IMR-90 (cell line): ENCODE measurements at regions of chr3 and their contacts with region 1.

Region 1: DNA sequence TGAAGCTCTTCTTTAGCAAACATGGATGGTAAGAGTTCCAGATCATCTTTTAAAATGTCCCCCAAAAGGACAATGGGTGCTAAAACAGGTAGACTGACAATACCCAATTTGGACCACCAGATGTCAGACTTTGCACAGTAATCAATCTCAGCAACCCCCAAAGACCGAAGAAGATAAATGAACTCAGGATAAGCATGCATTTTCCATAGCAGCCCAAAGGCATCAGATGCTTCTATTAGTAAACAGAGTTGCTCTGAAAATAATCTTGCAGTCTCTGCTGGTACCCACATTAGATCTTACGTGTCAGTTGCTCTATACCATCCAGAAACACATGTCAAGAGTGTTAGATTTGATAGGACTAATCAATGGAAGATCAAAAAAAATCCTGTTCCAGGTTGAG is 20.6 kb downstream of the MYH15 start:
- DNase-seq: peak; percentile 51
- ATAC-seq: peak; percentile 48
- H3K4me3 ChIP-seq: no peak overlapping the region
- H3K27ac ChIP-seq: no peak overlapping the region
- H3K4me1 ChIP-seq: peaks cover 4% of the 10 kb centered on the region
- H3K27me3 ChIP-seq: no peaks in the 10 kb centered on the region
- CTCF ChIP-seq: peak; percentile 70
- POLR2A ChIP-seq: no peak
- RAD21 ChIP-seq: peak; percentile 84

Region 2: GRCh38 chr3:107676469-107677309 is 813.1 kb before region 1 on chr3:
- CTCF ChIA-PET with region 1: no interaction called
- POLR2A ChIA-PET with region 1: no interaction called
- dilution Hi-C with region 1: no loop called
- in situ Hi-C with region 1: loop called (anchors 10 kb)
- intact Hi-C with region 1: no loop called
- DNase-seq: peak; percentile 43
- ATAC-seq: peak; percentile 54; the same call in 1 of the 2 replicates
- H3K4me3 ChIP-seq: no peak overlapping the region
- H3K27ac ChIP-seq: no peak overlapping the region
- H3K4me1 ChIP-seq: 0 out of 2 replicates have a peak, but pooled peaks cover 3% of the 10 kb centered on the region
- H3K27me3 ChIP-seq: no peaks in the 10 kb centered on the region
- CTCF ChIP-seq: peak; percentile 57
- POLR2A ChIP-seq: no peak
- RAD21 ChIP-seq: peak; percentile 50

Region 3: GRCh38 chr3:108189440-108189839 is 300.3 kb before region 1 on chr3:
- CTCF ChIA-PET with region 1: no interaction called
- POLR2A ChIA-PET with region 1: no interaction called
- dilution Hi-C with region 1: no loop called
- in situ Hi-C with region 1: no loop called
- intact Hi-C with region 1: no loop called
- DNase-seq: no peak
- ATAC-seq: no peak
- H3K4me3 ChIP-seq: no peak overlapping the region
- H3K27ac ChIP-seq: no peak overlapping the region
- H3K4me1 ChIP-seq: no peaks in the 10 kb centered on the region
- H3K27me3 ChIP-seq: no peaks in the 10 kb centered on the region
- CTCF ChIP-seq: no peak
- POLR2A ChIP-seq: no peak
- RAD21 ChIP-seq: no peak

Region 4: DNA sequence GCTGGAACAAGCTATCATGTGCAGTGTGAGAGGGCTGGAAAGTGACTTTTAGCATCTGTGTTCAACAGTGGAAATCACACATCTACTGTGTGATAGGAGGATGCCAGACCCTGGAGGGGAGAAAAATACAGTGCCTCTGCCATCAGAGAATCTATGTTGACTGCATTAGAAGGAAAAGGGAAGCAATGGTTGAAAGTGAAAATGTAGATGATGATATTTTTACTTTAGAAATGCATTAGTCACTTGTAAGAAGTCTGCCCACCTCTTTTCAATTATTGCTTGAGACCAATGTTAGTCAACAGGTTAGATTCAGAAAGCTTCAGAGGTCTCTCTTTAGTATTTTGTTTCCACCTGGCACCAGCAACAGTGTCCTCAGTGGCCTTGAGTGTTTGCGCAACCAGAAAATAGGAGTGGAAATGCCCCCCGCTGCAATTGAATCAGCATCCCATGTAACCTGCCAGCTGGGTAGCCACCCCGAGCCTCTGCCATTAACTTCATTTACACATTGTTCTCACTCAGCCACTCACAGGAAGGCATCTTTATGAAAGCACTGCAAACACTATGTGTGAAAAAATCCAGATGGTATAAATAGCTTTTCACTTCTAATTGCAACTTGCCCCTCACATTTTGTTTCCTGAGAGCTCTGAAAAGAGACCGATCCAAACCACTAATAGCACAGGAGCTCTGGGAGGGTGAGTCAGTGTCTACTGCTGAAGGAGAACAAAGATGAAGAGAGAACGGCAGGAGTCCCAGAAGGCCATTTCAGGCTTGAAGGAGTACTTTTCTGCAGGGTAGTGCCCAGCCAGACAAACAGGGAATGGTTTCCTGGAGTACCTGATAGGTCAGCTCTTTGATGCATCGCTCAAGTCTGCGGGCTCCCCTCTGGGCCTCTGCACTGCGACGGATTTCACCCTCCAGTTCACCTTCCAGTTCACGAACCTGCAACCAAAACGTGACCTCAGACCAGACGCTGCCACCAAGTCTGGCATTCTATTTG is 101.3 kb before region 1 on chr3:
- CTCF ChIA-PET with region 1: no interaction called
- POLR2A ChIA-PET with region 1: no interaction called
- dilution Hi-C with region 1: no loop called
- in situ Hi-C with region 1: no loop called
- intact Hi-C with region 1: no loop called
- DNase-seq: no peak
- ATAC-seq: no peak
- H3K4me3 ChIP-seq: no peak overlapping the region
- H3K27ac ChIP-seq: no peak overlapping the region
- H3K4me1 ChIP-seq: no peaks in the 10 kb centered on the region
- H3K27me3 ChIP-seq: peaks cover 11% of the 10 kb centered on the region
- CTCF ChIP-seq: no peak
- POLR2A ChIP-seq: no peak
- RAD21 ChIP-seq: no peak

Region 5: GRCh38 chr3:108552267-108553159 is 62.7 kb after region 1 on chr3:
- CTCF ChIA-PET with region 1: interaction called, 11 read pairs
- POLR2A ChIA-PET with region 1: no interaction called
- dilution Hi-C with region 1: no loop called
- in situ Hi-C with region 1: loop called (anchors 5 kb)
- intact Hi-C with region 1: loop called (anchors 1 kb)
- DNase-seq: peak; percentile 56
- ATAC-seq: peak; percentile 59; the same call in 1 of the 2 replicates
- H3K4me3 ChIP-seq: no peak overlapping the region
- H3K27ac ChIP-seq: no peak overlapping the region
- H3K4me1 ChIP-seq: peaks cover 4% of the 10 kb centered on the region; the same call in 1 of the 2 replicates
- H3K27me3 ChIP-seq: no peaks in the 10 kb centered on the region
- CTCF ChIP-seq: peak; percentile 60
- POLR2A ChIP-seq: no peak
- RAD21 ChIP-seq: peak; percentile 53

Region 6: DNA sequence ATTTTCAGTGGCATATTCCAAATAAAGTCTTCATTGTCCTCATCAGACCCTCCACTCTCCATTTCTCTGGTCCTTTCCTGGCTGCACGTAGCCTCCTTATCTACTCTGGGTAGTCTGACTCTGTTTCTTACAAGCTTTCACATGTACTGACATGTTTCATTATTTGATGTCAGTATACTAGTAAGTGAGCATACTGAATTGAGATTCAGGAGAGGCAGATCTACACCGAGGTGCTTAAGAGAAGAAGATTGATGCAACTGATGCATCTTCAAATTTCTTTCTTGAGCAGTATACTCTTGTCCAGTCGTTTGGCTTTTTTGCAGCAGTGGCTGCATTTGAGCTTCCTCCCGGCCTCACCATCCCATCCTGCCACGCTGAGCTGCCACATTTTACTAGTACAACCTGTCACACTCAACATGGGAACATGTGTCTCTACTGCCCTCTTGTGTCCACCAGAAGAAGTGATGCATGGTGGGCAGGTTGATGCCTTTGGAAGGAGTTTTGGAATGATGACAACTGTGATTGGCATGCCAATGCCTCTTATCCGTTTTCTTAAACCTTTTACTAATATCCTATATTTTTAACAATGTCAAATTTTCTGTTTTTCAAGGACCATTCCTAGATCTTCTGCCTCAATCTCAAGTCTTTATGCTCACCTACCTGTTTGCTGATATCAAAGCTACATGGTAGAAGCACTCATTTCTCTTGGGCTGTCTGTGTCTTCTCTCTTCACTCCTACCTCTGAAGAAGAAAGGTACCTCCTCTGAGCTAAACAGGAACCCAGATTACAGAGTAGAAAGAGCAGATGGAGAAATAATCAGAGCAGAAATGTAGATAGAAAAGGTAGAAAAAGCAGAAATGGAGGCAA is 425.2 kb after region 1 on chr3:
- CTCF ChIA-PET with region 1: interaction called, 4 read pairs
- POLR2A ChIA-PET with region 1: no interaction called
- dilution Hi-C with region 1: no loop called
- in situ Hi-C with region 1: loop called (anchors 10 kb)
- intact Hi-C with region 1: loop called (anchors 2 kb)
- DNase-seq: peak; percentile 63
- ATAC-seq: peak; percentile 85
- H3K4me3 ChIP-seq: no peak overlapping the region
- H3K27ac ChIP-seq: no peak overlapping the region
- H3K4me1 ChIP-seq: no peaks in the 10 kb centered on the region
- H3K27me3 ChIP-seq: no peaks in the 10 kb centered on the region
- CTCF ChIP-seq: peak; percentile 80
- POLR2A ChIP-seq: no peak
- RAD21 ChIP-seq: peak; percentile 78

Region 7: GRCh38 chr3:109081746-109082510 is 592.2 kb after region 1 on chr3:
- CTCF ChIA-PET with region 1: no interaction called
- POLR2A ChIA-PET with region 1: no interaction called
- dilution Hi-C with region 1: no loop called
- in situ Hi-C with region 1: no loop called
- intact Hi-C with region 1: loop called (anchors 1 kb)
- DNase-seq: peak; percentile 54
- ATAC-seq: peak; percentile 75
- H3K4me3 ChIP-seq: no peak overlapping the region
- H3K27ac ChIP-seq: no peak overlapping the region
- H3K4me1 ChIP-seq: no peaks in the 10 kb centered on the region
- H3K27me3 ChIP-seq: no peaks in the 10 kb centered on the region
- CTCF ChIP-seq: peak; percentile 77
- POLR2A ChIP-seq: no peak
- RAD21 ChIP-seq: peak; percentile 71